Activated B cell treated with CpG ODN at 0.5 μM for 24 hours (primary cell): ENCODE measurements at regions of chr1 and their contacts with region 1.

Region 1: DNA sequence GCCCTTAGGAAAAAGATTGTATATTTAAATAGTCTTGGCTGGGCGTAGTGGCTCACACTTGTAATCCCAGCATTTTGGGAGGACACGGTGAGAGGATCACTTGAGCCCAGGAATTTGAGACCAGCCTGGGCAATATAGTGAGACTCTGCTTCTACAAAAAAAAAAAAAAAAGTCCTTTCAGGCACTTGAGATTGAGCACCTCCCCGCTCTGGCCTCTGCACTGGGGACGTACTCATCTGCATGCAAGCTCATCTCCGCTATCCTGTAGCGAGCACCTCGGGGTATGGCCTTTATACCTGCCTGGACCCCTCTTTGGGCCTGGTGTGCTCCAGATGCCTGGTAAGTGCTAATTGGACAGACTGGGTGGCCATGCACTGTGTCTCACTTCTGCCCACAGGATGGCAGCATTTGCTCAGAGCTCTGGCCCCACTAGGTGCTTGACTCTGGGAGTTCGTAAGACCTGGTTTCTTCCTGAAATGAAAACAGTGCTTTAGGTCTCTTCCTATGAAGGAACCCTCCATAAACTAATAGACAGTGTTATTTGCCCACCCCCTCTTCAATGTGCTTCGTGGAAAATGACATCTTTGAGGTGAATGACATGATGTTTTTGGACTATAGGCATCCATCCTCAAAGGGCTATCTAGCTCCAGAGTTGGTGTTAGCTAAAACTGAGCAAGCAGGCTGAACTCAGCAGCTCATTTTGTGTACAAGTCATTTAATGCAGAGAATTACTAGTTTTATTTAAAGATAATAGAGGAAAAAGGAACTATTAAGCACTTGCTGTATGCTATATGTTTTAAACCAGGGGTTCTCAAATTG is 61.7 kb upstream of the ADAR start:
- DNase-seq: peak; percentile 37
- ATAC-seq: peak; percentile 98
- H3K4me3 Mint-ChIP-seq: no peak overlapping the region
- H3K27ac Mint-ChIP-seq: no peak overlapping the region
- H3K4me1 Mint-ChIP-seq: no peaks in the 10 kb centered on the region
- H3K27me3 Mint-ChIP-seq: no peaks in the 10 kb centered on the region
- CTCF ChIP-seq: no peak

Region 2: GRCh38 chr1:154878371-154879022 is 208.8 kb after region 1 on chr1:
- CTCF ChIA-PET with region 1: interaction called, 22 read pairs
- POLR2A ChIA-PET with region 1: no interaction called
- intact Hi-C with region 1: loop called (anchors 1 kb)
- DNase-seq: peak; percentile 64
- ATAC-seq: peak; percentile 99
- H3K4me3 Mint-ChIP-seq: no peak overlapping the region
- H3K27ac Mint-ChIP-seq: no peak overlapping the region
- H3K4me1 Mint-ChIP-seq: no peaks in the 10 kb centered on the region
- H3K27me3 Mint-ChIP-seq: no peaks in the 10 kb centered on the region
- CTCF ChIP-seq: no peak

Region 3: GRCh38 chr1:156001682-156002171 is 1332.1 kb after region 1 on chr1:
- CTCF ChIA-PET with region 1: no interaction called
- POLR2A ChIA-PET with region 1: no interaction called
- intact Hi-C with region 1: no loop called
- DNase-seq: no peak
- ATAC-seq: no peak
- H3K4me3 Mint-ChIP-seq: no peak overlapping the region
- H3K27ac Mint-ChIP-seq: no peak overlapping the region
- H3K4me1 Mint-ChIP-seq: no peaks in the 10 kb centered on the region
- H3K27me3 Mint-ChIP-seq: no peaks in the 10 kb centered on the region
- CTCF ChIP-seq: no peak